Naive thymus-derived CD4-positive, alpha-beta T cell (primary cell): ENCODE measurements at regions of chr3 and their contacts with region 1.

Region 1: GRCh38 chr3:14921078-14921616 is 26.2 kb upstream of the NR2C2 start:
- DNase-seq: peak; percentile 66 to 85 (median 80)
- ATAC-seq: peak; percentile 94
- H3K4me3 ChIP-seq: no peak overlapping the region
- H3K4me3 Mint-ChIP-seq: no peak overlapping the region
- H3K27ac ChIP-seq: no peak overlapping the region
- H3K27ac Mint-ChIP-seq: peak overlapping the region in 1 of 9 donors; percentile 11
- H3K4me1 ChIP-seq: no peaks in the 10 kb centered on the region
- H3K4me1 Mint-ChIP-seq: peaks cover 0 to 4% (median 0%) of the 10 kb centered on the region in 7 donors
- H3K27me3 ChIP-seq: no peaks in the 10 kb centered on the region
- H3K27me3 Mint-ChIP-seq: peaks cover 0 to 6% (median 0%) of the 10 kb centered on the region in 5 donors

Region 2: DNA sequence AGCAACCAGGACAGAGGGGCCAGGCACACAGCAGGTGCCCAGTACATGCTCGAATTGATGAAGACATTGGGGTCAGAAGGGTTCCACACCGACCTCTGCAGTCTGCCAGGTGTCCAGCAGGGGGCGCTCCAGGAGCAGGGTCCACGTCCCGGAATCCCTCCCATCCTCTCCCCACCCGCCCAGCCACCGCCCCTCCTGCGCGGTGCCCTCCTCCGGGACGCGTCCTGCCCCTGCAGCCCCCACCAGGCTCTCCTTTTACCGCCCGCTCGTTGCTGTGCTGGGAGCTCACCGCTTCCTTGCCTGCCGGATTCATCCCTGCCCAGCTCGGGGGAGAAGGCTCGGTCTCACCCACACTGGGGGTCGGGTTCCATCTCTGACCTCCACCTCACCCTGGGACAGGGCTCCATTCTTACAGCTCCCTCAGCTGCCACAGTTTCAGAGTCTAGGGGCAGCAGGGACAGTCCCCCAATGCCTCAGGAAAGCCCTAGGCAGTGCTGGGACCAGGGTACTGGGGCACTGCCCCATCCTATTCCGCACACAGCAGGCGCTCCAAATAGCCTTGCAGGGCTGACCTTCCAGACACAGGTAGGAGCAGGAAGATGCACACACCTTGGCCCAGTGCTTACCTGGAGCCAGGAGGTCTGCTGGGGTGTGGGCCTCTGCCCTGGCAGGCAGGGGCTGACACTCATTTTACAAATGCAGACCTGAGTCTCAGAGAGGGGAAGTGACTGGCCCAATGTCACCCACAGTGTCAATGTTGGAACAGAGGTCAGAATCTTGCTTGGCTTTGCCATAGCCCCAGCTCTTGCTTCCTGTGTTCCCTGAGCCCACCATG is 412.0 kb before region 1 on chr3:
- CTCF ChIA-PET with region 1: interaction called, 9 read pairs
- POLR2A ChIA-PET with region 1: no interaction called
- intact Hi-C with region 1: loop called (anchors 1 kb)
- DNase-seq: peak; percentile 15 to 78 (median 48)
- ATAC-seq: peak; percentile 70
- H3K4me3 ChIP-seq: no peak overlapping the region
- H3K4me3 Mint-ChIP-seq: peak overlapping the region in 1 of 10 donors; percentile 50
- H3K27ac ChIP-seq: no peak overlapping the region
- H3K27ac Mint-ChIP-seq: peak overlapping the region in 1 of 9 donors; percentile 72
- H3K4me1 ChIP-seq: no peaks in the 10 kb centered on the region
- H3K4me1 Mint-ChIP-seq: peaks cover 0 to 13% (median 5%) of the 10 kb centered on the region in 7 donors
- H3K27me3 ChIP-seq: no peaks in the 10 kb centered on the region
- H3K27me3 Mint-ChIP-seq: peaks cover 0 to 5% (median 0%) of the 10 kb centered on the region in 5 donors

Region 3: GRCh38 chr3:14678015-14678503 is 243.1 kb before region 1 on chr3:
- CTCF ChIA-PET with region 1: interaction called, 20 read pairs
- POLR2A ChIA-PET with region 1: no interaction called
- intact Hi-C with region 1: loop called (anchors 1 kb)
- DNase-seq: no peak
- ATAC-seq: no peak
- H3K4me3 ChIP-seq: no peak overlapping the region
- H3K4me3 Mint-ChIP-seq: no peak overlapping the region
- H3K27ac ChIP-seq: no peak overlapping the region
- H3K27ac Mint-ChIP-seq: peak overlapping the region in 4 of 9 donors; percentile 22 to 74 (median 56)
- H3K4me1 ChIP-seq: no peaks in the 10 kb centered on the region
- H3K4me1 Mint-ChIP-seq: peaks cover 0 to 1% (median 0%) of the 10 kb centered on the region in 7 donors
- H3K27me3 ChIP-seq: no peaks in the 10 kb centered on the region
- H3K27me3 Mint-ChIP-seq: peaks cover 0 to 3% (median 0%) of the 10 kb centered on the region in 5 donors

Region 4: DNA sequence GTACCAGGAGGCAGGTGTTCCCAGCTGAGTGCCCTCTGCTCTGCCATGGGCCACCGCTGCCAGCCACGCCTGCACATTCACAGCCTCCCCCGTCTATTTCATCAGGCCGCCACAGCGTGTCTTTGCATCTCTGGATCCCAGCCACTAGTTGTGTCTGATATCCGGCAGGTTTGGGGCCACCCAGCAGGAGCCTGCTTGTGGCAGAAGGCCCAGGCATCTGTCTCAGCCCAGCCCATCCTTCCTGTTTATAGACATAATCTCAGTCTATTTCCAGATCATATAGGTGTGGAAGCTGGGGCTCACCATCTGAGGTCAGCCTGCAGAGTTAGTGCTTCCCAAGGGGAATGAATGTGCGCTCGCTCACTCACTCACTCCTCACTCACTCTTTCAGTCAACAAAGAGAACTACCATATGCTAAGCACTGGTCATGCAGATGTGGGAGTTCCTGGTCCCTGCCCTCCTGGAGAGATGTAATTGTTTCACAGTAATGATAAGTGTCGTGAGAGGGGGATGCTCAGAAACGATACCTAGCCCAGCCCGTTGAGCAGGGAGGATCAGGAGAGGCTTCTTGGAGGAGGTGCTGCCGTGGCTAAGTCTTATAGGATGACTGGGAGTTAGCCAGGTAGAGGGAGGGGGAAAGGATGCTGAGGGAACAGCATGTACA is 41.8 kb before region 1 on chr3:
- CTCF ChIA-PET with region 1: interaction called, 10 read pairs
- POLR2A ChIA-PET with region 1: no interaction called
- intact Hi-C with region 1: loop called in 1 of 2 experiments (anchors 2 kb)
- DNase-seq: peak in 7 of 9 donors; percentile 21 to 59 (median 41)
- ATAC-seq: peak; percentile 65
- H3K4me3 ChIP-seq: no peak overlapping the region
- H3K4me3 Mint-ChIP-seq: peak overlapping the region in 9 of 10 donors; percentile 26 to 62 (median 43)
- H3K27ac ChIP-seq: no peak overlapping the region
- H3K27ac Mint-ChIP-seq: peak overlapping the region; percentile 14 to 93 (median 75)
- H3K4me1 ChIP-seq: peaks cover 4 to 59% of the 10 kb centered on the region in 2 donors
- H3K4me1 Mint-ChIP-seq: peaks cover 34 to 56% (median 48%) of the 10 kb centered on the region in 7 donors
- H3K27me3 ChIP-seq: no peaks in the 10 kb centered on the region
- H3K27me3 Mint-ChIP-seq: peaks cover 0 to 3% (median 0%) of the 10 kb centered on the region in 5 donors

Region 5: DNA sequence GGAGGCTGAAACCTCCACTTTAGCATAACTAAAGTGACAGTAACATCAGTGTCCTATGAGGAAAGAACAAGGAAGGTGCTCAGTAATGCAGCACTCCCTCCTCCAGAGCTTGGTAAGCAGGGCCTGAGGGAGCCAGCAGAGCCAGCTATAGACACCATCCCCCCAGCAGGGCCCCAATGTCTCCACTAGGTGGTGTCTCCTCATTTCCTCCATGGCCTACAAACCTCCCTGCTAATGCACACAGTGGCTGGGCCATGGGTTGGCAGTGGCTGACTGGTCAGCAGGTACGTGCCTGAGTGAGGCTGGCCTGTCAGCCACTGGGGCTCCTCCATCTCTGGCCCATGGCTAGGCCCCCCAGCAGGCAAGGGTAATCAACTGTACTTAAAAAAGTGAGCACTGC is 130.4 kb after region 1 on chr3:
- CTCF ChIA-PET with region 1: no interaction called
- POLR2A ChIA-PET with region 1: no interaction called
- intact Hi-C with region 1: loop called (anchors 5 kb)
- DNase-seq: peak in 6 of 9 donors; percentile 13 to 40 (median 27)
- ATAC-seq: peak; percentile 81
- H3K4me3 ChIP-seq: no peak overlapping the region
- H3K4me3 Mint-ChIP-seq: no peak overlapping the region
- H3K27ac ChIP-seq: no peak overlapping the region
- H3K27ac Mint-ChIP-seq: peak overlapping the region in 6 of 9 donors; percentile 32 to 87 (median 68)
- H3K4me1 ChIP-seq: peaks cover 0 to 12% of the 10 kb centered on the region in 2 donors
- H3K4me1 Mint-ChIP-seq: peaks cover 15 to 40% (median 25%) of the 10 kb centered on the region in 7 donors
- H3K27me3 ChIP-seq: no peaks in the 10 kb centered on the region
- H3K27me3 Mint-ChIP-seq: no peaks in the 10 kb centered on the region